B cell (primary cell): ENCODE measurements at regions of chr5 and their contacts with region 1.

Region 1: DNA sequence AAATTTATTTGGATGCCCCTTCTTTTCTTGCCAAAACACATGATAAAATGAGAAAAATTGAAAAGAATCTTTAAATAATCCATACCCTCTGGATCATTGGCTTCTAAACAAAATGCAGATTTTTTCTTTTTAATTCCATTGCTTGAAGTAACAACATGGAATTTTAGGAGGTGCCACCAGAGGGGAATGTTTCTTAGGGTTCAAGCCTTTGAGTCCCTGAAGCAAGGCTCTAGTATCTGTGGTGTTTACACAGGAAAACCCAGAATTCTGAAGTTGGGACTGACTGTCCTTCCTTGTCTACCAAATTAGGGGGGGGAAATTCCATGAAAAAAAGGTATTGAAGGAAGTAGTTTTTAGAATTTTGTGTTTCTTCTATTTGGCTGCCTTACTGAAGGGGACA is 69.4 kb downstream of the LMNB1 start:
- DNase-seq: no peak
- ATAC-seq: no peak
- H3K4me3 ChIP-seq: peak overlapping the region in 1 of 5 experiments; percentile 38
- H3K4me3 Mint-ChIP-seq: peak overlapping the region; percentile 20
- H3K27ac ChIP-seq: peak overlapping the region; percentile 89
- H3K27ac Mint-ChIP-seq: peak overlapping the region; percentile 35
- H3K4me1 ChIP-seq: peaks cover 16 to 26% of the 10 kb centered on the region in 2 donors
- H3K4me1 Mint-ChIP-seq: peaks cover 44% of the 10 kb centered on the region
- H3K27me3 ChIP-seq: no peaks in the 10 kb centered on the region
- H3K27me3 Mint-ChIP-seq: no peaks in the 10 kb centered on the region
- CTCF ChIP-seq: no peak

Region 2: DNA sequence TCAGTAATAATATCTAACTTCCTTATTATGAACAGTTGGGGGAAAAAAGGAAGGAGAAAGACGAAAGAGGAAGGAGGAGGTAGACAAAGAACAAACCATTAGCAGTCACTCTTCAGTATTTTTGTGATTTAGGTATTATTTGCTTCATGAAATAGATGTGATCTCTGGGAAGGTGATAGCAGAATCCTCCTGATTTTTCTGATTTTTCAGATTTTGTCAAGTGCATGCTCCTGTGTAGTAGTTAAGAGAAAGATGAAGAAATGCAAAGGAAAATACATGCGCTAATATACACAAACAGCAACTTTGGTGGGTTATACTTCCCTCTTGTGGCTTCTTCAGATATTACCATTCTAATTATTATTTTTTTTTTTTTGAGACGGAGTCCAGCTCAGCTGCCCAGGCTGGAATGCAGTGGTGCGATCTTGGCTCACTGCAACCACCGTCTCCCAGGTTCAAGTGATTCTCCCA is 37.8 kb before region 1 on chr5:
- CTCF ChIA-PET with region 1: no interaction called
- POLR2A ChIA-PET with region 1: no interaction called
- intact Hi-C with region 1: loop called (anchors 2 kb)
- DNase-seq: peak; percentile 73
- ATAC-seq: peak; percentile 59
- H3K4me3 ChIP-seq: peak overlapping the region; percentile 8 to 61 (median 33)
- H3K4me3 Mint-ChIP-seq: peak overlapping the region; percentile 79
- H3K27ac ChIP-seq: peak overlapping the region; percentile 60 to 77
- H3K27ac Mint-ChIP-seq: peak overlapping the region; percentile 84
- H3K4me1 ChIP-seq: peaks cover 15 to 35% of the 10 kb centered on the region in 2 donors
- H3K4me1 Mint-ChIP-seq: peaks cover 55% of the 10 kb centered on the region
- H3K27me3 ChIP-seq: no peaks in the 10 kb centered on the region
- H3K27me3 Mint-ChIP-seq: no peaks in the 10 kb centered on the region
- CTCF ChIP-seq: peak; percentile 79

Region 3: DNA sequence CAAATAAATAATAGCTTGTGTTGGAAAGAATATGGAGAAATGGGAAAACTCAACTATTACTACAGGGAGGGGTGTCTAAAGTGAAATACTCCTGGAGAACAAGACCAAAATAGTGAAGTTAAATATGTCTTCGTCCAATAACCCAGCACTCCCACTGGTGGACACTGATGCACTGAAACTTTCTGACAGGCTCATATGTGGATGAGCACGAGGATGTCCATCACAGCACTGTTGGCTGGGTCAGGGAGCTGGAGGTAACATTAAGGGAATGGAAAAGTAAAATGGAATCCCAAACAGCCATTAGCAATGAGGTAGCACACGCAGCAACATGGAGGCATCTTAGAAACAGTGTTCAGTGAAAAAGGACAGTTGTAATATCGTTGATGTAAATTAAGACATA is 17.1 kb after region 1 on chr5:
- CTCF ChIA-PET with region 1: no interaction called
- POLR2A ChIA-PET with region 1: interaction called, 13 read pairs
- intact Hi-C with region 1: no loop called
- DNase-seq: no peak
- ATAC-seq: no peak
- H3K4me3 ChIP-seq: no peak overlapping the region
- H3K4me3 Mint-ChIP-seq: no peak overlapping the region
- H3K27ac ChIP-seq: no peak overlapping the region
- H3K27ac Mint-ChIP-seq: no peak overlapping the region
- H3K4me1 ChIP-seq: peaks cover under 1% of the 10 kb centered on the region in 2 donors
- H3K4me1 Mint-ChIP-seq: peaks cover under 1% of the 10 kb centered on the region
- H3K27me3 ChIP-seq: no peaks in the 10 kb centered on the region
- H3K27me3 Mint-ChIP-seq: no peaks in the 10 kb centered on the region
- CTCF ChIP-seq: no peak

Region 4: DNA sequence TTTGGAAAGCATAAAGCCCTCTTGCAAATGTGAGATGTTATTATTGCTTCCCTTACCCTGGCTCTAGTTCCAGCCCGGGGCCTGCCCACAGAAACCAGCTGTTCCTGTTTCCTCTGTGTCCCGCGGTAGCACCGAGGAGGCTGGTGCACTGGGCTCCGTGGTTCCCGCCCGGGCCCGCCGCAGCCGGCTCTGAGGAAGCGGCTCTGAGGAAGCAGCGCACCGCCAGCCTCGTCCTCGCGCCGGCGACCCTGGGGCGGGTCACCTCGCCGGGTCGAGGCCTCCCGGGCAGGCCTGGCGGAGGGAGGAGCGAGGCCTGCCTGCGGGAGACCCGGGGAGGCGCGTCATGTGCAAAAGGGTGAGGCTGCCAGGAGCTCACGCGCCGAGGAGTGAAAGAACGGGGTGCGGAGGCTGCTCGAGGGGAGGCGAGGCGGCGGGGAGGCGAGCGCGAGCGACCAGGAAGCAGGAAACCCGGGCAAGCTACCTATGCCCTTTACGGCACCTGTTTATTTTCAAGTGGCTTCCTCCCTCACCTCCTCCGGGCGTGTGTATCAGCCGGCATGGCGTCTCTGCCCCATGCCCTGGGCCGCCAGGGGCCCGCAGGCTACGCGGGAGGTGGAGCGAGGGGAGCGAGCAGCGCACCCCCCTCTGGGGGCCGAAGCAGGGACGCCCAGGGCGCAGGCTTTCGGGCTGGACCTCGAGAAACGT is 383.0 kb after region 1 on chr5:
- CTCF ChIA-PET with region 1: no interaction called
- POLR2A ChIA-PET with region 1: no interaction called
- intact Hi-C with region 1: loop called (anchors 1 kb)
- DNase-seq: peak; percentile 76
- ATAC-seq: peak; percentile 84
- H3K4me3 ChIP-seq: peak overlapping the region; percentile 56 to 79 (median 68)
- H3K4me3 Mint-ChIP-seq: peak overlapping the region; percentile 87
- H3K27ac ChIP-seq: peak overlapping the region; percentile 67
- H3K27ac Mint-ChIP-seq: peak overlapping the region; percentile 89
- H3K4me1 ChIP-seq: peaks cover 8 to 15% of the 10 kb centered on the region in 2 donors
- H3K4me1 Mint-ChIP-seq: peaks cover 19% of the 10 kb centered on the region
- H3K27me3 ChIP-seq: no peaks in the 10 kb centered on the region
- H3K27me3 Mint-ChIP-seq: no peaks in the 10 kb centered on the region
- CTCF ChIP-seq: no peak